ENCODE measurements at regions of chr2 and their contacts with region 1.

Region 1: GRCh38 chr2:11850082-11850481 is 103.7 kb downstream of the LPIN1 start:
- DNase-seq: no peak
- ATAC-seq: no peak
- H3K4me3 ChIP-seq: no peak overlapping the region
- H3K4me3 Mint-ChIP-seq: no peak overlapping the region
- H3K27ac ChIP-seq: no peak overlapping the region
- H3K27ac Mint-ChIP-seq: no peak overlapping the region
- H3K4me1 ChIP-seq: no peaks in the 10 kb centered on the region
- H3K4me1 Mint-ChIP-seq: no peaks in the 10 kb centered on the region
- H3K27me3 ChIP-seq: no peaks in the 10 kb centered on the region
- H3K27me3 Mint-ChIP-seq: no peaks in the 10 kb centered on the region
- CTCF ChIP-seq: no peak

Region 2: GRCh38 chr2:12560618-12561017 is 710.5 kb after region 1 on chr2:
- CTCF ChIA-PET with region 1: no interaction called
- POLR2A ChIA-PET with region 1: no interaction called
- intact Hi-C with region 1: loop called in 1 of 2 experiments (anchors 10 kb)
- DNase-seq: no peak
- ATAC-seq: no peak
- H3K4me3 ChIP-seq: no peak overlapping the region
- H3K4me3 Mint-ChIP-seq: no peak overlapping the region
- H3K27ac ChIP-seq: no peak overlapping the region
- H3K27ac Mint-ChIP-seq: no peak overlapping the region
- H3K4me1 ChIP-seq: peaks cover 10% of the 10 kb centered on the region
- H3K4me1 Mint-ChIP-seq: peaks cover 68% of the 10 kb centered on the region
- H3K27me3 ChIP-seq: no peaks in the 10 kb centered on the region
- H3K27me3 Mint-ChIP-seq: no peaks in the 10 kb centered on the region
- CTCF ChIP-seq: no peak